ENCODE measurements at regions of chr17 and their contacts with region 1.

Region 1: GRCh38 chr17:78360371-78361224 is 721 bp upstream of the SOCS3 start:
- DNase-seq: peak; percentile 63 to 96
- H3K4me3 ChIP-seq: peak overlapping the region; percentile 83 to 90
- H3K27ac ChIP-seq: peak overlapping the region; percentile 95 to 97
- H3K4me1 ChIP-seq: peaks cover 9 to 39% of the 10 kb centered on the region in 2 donors
- H3K27me3 ChIP-seq: no peaks in the 10 kb centered on the region
- CTCF ChIP-seq: peak; percentile 85 to 96 (median 95)

Region 2: DNA sequence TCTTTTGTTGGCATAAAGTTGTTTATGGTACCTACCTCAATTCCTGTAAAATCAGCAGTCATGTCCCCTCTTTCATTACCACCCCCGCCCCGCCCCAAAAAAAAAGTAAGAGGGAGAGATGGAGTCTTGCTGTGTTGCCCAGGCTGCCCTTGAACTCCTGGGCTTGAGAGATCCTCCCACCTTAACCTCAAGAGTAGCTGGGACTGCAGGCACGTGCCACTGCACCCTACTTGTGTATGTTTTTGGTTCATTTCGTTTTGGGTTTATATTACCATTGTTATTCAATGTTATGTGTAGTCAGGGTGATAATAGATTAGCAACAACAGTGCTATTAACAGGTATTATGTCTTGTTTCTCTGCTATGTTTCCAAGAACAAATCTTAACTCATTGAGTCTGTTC is 386.2 kb before region 1 on chr17:
- intact Hi-C with region 1: no loop called
- DNase-seq: no peak
- H3K4me3 ChIP-seq: no peak overlapping the region
- H3K27ac ChIP-seq: no peak overlapping the region
- H3K4me1 ChIP-seq: peaks cover 2 to 4% of the 10 kb centered on the region in 2 donors
- H3K27me3 ChIP-seq: no peaks in the 10 kb centered on the region
- CTCF ChIP-seq: no peak

Region 3: GRCh38 chr17:78289802-78290363 is 70.7 kb before region 1 on chr17:
- intact Hi-C with region 1: loop called (anchors 2 kb)
- DNase-seq: peak in 1 of 2 donors; percentile 85
- H3K4me3 ChIP-seq: no peak overlapping the region
- H3K27ac ChIP-seq: no peak overlapping the region
- H3K4me1 ChIP-seq: no peaks in the 10 kb centered on the region
- H3K27me3 ChIP-seq: no peaks in the 10 kb centered on the region
- CTCF ChIP-seq: peak; percentile 77 to 79 (median 77)

Region 4: GRCh38 chr17:78313735-78314648 is 46.6 kb before region 1 on chr17:
- intact Hi-C with region 1: loop called (anchors 1 kb)
- DNase-seq: peak in 1 of 2 donors; percentile 84
- H3K4me3 ChIP-seq: peak overlapping the region; percentile 62 to 78
- H3K27ac ChIP-seq: peak overlapping the region; percentile 81 to 83
- H3K4me1 ChIP-seq: peaks cover 18 to 27% of the 10 kb centered on the region in 2 donors
- H3K27me3 ChIP-seq: no peaks in the 10 kb centered on the region
- CTCF ChIP-seq: peak in 1 of 3 experiments; percentile 4

Region 5: GRCh38 chr17:78341559-78342448 is 18.8 kb before region 1 on chr17:
- intact Hi-C with region 1: loop called (anchors 1 kb)
- DNase-seq: peak; percentile 49 to 87
- H3K4me3 ChIP-seq: peak overlapping the region; percentile 43 to 72
- H3K27ac ChIP-seq: peak overlapping the region; percentile 99
- H3K4me1 ChIP-seq: peaks cover 17 to 22% of the 10 kb centered on the region in 2 donors
- H3K27me3 ChIP-seq: no peaks in the 10 kb centered on the region
- CTCF ChIP-seq: no peak

Region 6: DNA sequence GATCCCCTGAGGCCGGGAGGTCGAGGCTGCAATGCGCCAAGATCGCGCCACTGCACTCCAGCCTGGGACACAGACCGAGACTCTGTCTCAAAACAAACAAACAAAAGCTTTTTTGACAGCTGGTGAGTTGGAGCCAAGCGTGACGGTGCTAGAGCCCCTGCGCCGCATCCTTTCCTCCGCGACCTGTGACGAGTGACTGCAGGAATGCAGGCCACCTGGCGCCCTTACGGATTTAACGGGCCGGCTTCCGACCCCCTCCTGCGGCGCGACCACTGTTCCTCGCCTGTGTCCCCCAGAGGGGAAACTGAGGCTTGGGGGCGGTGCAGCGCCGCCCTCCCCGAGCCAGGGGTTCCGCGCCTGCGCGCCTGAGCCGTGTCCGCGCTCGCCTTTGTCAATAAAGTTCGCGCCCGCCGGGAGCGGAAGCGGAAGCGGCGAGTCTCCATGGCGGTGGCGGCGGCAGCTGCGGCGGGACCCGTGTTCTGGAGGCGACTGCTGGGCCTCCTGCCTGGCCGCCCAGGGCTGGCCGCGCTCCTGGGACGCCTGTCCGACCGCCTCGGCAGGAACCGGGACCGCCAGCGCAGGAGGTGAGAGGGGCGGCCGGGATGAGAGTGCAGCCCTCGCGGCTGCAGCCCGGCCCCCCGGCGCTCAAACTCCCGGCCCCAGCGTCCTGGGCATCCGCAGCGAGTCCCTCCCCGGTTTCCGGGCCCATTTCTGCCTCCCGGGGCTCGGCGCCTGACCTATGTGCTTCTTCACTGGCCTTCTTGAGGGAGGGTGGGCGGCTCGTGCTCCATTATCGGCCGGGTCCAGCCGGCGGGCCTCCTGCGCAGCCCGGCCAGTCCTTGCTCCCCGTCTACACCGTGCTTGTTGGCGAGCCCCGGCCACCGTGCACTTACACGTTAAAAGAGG is 17.9 kb after region 1 on chr17 and contains the start of gene PGS1:
- intact Hi-C with region 1: loop called (anchors 1 kb)
- DNase-seq: peak in 1 of 2 donors; percentile 89
- H3K4me3 ChIP-seq: peak within 1 kb of the TSS; percentile 86 to 97
- H3K27ac ChIP-seq: peak within 1 kb of the TSS; percentile 89 to 94
- H3K4me1 ChIP-seq: peaks cover 18 to 23% of the 10 kb centered on the region in 2 donors
- H3K27me3 ChIP-seq: no peaks in the 10 kb centered on the region
- CTCF ChIP-seq: no peak
- total RNA-seq, gene PGS1: 41.8 TPM

Region 7: DNA sequence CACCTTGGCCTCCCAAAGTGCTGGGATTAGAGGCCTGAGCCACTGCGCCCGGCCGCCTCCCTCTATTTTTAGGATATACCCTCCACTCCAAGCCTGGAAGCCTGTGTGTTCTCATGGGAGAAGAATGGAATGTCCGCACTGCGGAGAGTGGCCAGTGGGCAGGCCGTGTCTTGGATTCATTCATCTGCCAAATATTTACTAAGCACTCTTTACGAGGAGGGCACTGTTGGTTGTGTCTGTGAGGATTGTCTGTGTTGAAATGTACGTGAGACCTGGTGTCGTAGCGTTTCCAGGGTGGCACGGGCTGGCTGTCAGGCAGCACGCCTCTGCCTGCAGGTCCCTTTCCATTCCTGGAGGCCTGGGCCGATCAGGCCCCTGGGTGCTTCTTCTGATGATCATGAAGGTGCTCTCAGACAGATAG is 37.1 kb after region 1 on chr17:
- intact Hi-C with region 1: loop called (anchors 1 kb)
- DNase-seq: peak in 1 of 2 donors; percentile 85
- H3K4me3 ChIP-seq: peak overlapping the region in 1 of 2 donors; percentile 34
- H3K27ac ChIP-seq: peak overlapping the region; percentile 84 to 89
- H3K4me1 ChIP-seq: peaks cover 6 to 27% of the 10 kb centered on the region in 2 donors
- H3K27me3 ChIP-seq: no peaks in the 10 kb centered on the region
- CTCF ChIP-seq: no peak

Region 8: DNA sequence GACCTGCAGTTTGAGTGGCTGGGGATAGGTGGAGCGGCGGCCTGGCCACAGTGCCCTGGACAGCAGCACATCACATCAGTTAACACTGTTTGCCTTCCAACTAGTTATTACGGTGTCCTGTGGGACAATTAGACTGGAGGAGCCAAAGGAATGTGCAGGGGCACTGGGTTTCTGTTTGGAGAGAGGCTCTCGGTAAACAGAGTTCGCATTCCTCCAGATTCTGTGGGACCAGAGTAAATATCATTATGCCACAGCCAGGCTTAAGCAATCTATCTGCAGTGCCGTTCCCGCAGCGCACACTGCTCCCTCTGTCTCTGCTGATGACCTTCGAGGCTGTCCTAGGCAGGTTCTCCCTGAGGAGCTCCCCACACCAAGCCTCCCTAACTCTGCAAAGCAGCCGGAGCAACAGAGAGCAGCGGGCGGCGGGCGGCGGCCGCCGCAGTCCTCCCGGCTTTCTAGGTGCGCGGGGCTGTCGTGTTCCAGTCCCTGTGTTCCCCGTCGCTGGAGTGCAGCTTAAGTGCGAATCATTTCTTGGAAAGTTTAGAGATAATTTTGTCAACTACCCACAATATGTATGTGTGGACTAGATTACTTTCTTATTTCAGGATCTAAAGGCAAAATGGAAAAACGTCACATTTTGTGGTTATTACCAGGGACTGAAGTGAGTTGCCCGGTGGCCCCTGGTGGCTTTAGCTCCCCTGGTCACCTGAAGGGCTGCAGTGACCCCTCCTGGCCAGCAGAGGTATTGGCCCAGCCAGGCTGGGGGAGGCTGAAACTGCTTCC is 61.1 kb after region 1 on chr17:
- intact Hi-C with region 1: loop called (anchors 1 kb)
- DNase-seq: peak in 1 of 2 donors; percentile 86
- H3K4me3 ChIP-seq: no peak overlapping the region
- H3K27ac ChIP-seq: no peak overlapping the region
- H3K4me1 ChIP-seq: no peaks in the 10 kb centered on the region
- H3K27me3 ChIP-seq: no peaks in the 10 kb centered on the region
- CTCF ChIP-seq: peak; percentile 96 to 100 (median 97)

Measured in ascending aorta (tissue), 2 donors.